ENCODE measurements at regions of chr12 and their contacts with region 1.

Region 1: GRCh38 chr12:54958048-54958658 is 26.4 kb downstream of the TESPA1 start:
- DNase-seq: peak in 1 of 2 donors; percentile 51
- ATAC-seq: peak in 4 of 8 donors; percentile 42 to 61 (median 50)
- H3K4me3 ChIP-seq: no peak overlapping the region
- H3K27ac ChIP-seq: no peak overlapping the region
- H3K4me1 ChIP-seq: peaks cover 0 to 31% (median 0%) of the 10 kb centered on the region in 9 donors
- H3K27me3 ChIP-seq: peaks cover 0 to 46% (median 9%) of the 10 kb centered on the region in 7 donors
- CTCF ChIP-seq: peak; percentile 18 to 81 (median 70)

Region 2: GRCh38 chr12:54439521-54440255 is 518.5 kb before region 1 on chr12:
- intact Hi-C with region 1: no loop called
- DNase-seq: peak in 1 of 2 donors; percentile 16
- ATAC-seq: peak; percentile 85 to 93 (median 92)
- H3K4me3 ChIP-seq: no peak overlapping the region
- H3K27ac ChIP-seq: peak overlapping the region in 2 of 10 donors; percentile 11 to 49
- H3K4me1 ChIP-seq: peaks cover 0 to 15% (median 5%) of the 10 kb centered on the region in 9 donors
- H3K27me3 ChIP-seq: no peaks in the 10 kb centered on the region
- CTCF ChIP-seq: peak; percentile 69 to 92 (median 84)

Region 3: DNA sequence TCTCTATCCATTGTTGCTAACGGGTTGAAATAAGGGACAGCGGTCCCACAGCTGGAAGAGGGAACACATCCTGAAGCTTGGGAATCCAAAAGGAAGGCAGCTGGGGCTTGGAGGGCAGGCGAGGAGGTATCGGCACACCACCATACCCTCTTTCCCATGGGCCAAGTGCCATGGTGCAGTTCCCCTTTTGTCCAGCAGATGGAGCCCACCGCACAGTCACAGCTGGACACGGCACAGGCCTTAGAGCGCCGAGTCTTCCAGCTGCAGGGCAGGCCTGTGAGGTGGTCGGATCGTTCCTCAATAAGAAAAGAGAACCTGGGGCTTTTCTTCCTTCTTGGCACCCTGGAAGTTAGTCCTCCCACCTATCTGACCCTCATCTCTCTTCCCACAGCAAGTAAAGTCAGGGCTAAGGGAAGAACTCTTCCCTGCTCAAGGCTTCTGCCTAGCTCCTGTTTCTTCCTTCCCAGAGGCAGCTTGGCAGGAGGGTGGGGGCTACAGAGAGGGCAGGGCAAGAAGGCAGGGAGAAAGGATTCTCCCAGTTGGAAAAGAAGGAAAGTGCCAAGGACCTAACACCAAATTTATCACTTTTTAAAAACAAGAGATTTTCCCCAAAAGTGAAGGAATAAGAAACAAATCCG is 378.3 kb before region 1 on chr12:
- intact Hi-C with region 1: loop called in 1 of 10 experiments (anchors 10 kb)
- DNase-seq: peak; percentile 86 to 87
- ATAC-seq: peak; percentile 87 to 97 (median 94)
- H3K4me3 ChIP-seq: no peak overlapping the region
- H3K27ac ChIP-seq: peak overlapping the region in 1 of 10 donors; percentile 22
- H3K4me1 ChIP-seq: peaks cover 0 to 8% (median 6%) of the 10 kb centered on the region in 9 donors
- H3K27me3 ChIP-seq: peaks cover 0 to 23% (median 8%) of the 10 kb centered on the region in 7 donors
- CTCF ChIP-seq: peak; percentile 96 to 100 (median 99)

Region 4: GRCh38 chr12:54596526-54596946 is 361.6 kb before region 1 on chr12:
- intact Hi-C with region 1: loop called in 7 of 10 experiments (anchors 5 to 10 kb)
- DNase-seq: peak; percentile 51 to 61
- ATAC-seq: peak in 6 of 8 donors; percentile 57 to 70 (median 66)
- H3K4me3 ChIP-seq: no peak overlapping the region
- H3K27ac ChIP-seq: no peak overlapping the region
- H3K4me1 ChIP-seq: peaks cover 0 to 4% (median 0%) of the 10 kb centered on the region in 9 donors
- H3K27me3 ChIP-seq: peaks cover 0 to 19% (median 6%) of the 10 kb centered on the region in 7 donors
- CTCF ChIP-seq: peak; percentile 59 to 89 (median 82)

Region 5: DNA sequence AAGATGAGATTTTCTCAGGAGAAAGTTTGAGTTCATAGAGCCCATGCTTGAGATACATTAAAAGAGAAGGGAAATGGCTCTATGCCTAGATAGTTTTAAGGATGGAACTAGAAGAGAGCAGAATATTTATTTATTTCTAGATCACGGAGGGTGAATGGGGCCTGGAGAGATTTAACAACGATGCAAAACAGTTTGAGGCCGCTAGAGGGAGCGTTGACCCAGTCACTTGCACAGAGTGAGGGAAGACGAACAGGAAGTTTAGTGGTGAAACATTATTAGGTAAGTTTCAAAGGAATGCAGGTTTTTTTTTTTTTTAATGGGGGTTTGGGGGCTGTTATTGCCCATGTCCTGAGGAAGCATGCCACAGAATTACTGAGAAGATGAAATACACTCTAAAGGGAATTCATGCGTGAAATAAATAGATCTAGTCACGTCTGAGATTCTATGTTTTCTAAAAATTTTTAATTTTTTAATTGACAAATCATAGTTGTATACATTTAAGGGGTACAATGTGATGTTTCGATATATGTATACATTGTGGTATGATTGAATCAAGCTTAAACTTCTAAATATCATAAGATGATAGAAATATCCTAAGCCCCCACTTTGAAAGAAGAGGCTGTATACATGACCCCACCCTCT is 354.9 kb before region 1 on chr12:
- intact Hi-C with region 1: loop called in 7 of 10 experiments (anchors 5 to 10 kb)
- DNase-seq: peak in 1 of 2 donors; percentile 41
- ATAC-seq: peak; percentile 33 to 83 (median 76)
- H3K4me3 ChIP-seq: no peak overlapping the region
- H3K27ac ChIP-seq: no peak overlapping the region
- H3K4me1 ChIP-seq: no peaks in the 10 kb centered on the region
- H3K27me3 ChIP-seq: peaks cover 0 to 12% (median 7%) of the 10 kb centered on the region in 7 donors
- CTCF ChIP-seq: peak; percentile 43 to 82 (median 74)

Region 6: DNA sequence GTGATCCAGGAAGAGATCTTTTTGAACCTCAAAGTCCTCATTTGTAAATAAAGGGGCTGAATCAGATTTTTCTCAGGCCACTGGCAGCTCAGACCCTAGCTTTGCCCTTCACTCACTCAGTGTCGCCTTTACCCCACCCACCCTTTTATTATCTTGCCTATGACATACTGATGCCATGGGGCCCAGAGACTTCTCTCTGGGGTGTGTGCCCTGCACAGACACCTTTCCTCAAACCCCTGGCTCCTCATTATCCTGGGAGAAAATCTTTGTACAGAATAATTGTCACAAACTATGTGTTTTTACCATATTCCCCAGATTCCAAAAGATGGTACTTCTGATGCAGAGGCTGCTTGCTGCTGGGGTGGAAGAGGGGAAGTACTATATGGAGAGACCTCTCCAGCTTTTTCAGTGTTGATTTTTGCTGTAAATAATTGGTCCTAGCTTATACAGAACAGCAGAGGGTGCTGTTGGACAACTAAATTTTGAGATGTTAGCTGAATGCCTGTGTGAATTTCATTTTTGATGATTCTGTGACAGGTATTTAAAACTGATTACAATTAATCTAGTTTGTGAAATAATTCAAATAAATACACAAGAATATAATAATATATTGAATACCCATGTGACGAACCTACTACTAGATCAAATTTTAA is 256.1 kb before region 1 on chr12:
- intact Hi-C with region 1: loop called in 6 of 10 experiments (anchors 2 to 5 kb)
- DNase-seq: no peak
- ATAC-seq: no peak
- H3K4me3 ChIP-seq: no peak overlapping the region
- H3K27ac ChIP-seq: no peak overlapping the region
- H3K4me1 ChIP-seq: no peaks in the 10 kb centered on the region
- H3K27me3 ChIP-seq: peaks cover 0 to 16% (median 4%) of the 10 kb centered on the region in 7 donors
- CTCF ChIP-seq: peak; percentile 25 to 75 (median 65)

Region 7: GRCh38 chr12:54749191-54749818 is 208.8 kb before region 1 on chr12:
- intact Hi-C with region 1: loop called (anchors 1 to 5 kb)
- DNase-seq: peak in 1 of 2 donors; percentile 25
- ATAC-seq: no peak
- H3K4me3 ChIP-seq: no peak overlapping the region
- H3K27ac ChIP-seq: no peak overlapping the region
- H3K4me1 ChIP-seq: peaks cover 0 to 3% (median 0%) of the 10 kb centered on the region in 9 donors
- H3K27me3 ChIP-seq: peaks cover 0 to 20% (median 10%) of the 10 kb centered on the region in 7 donors
- CTCF ChIP-seq: peak; percentile 35 to 84 (median 76)

Region 8: GRCh38 chr12:54853995-54854566 is 104.1 kb before region 1 on chr12 and contains the start of gene MUCL1:
- intact Hi-C with region 1: loop called in 6 of 10 experiments (anchors 2 to 10 kb)
- DNase-seq: peak in 1 of 2 donors; percentile 42
- ATAC-seq: peak in 7 of 8 donors; percentile 46 to 67 (median 62)
- H3K4me3 ChIP-seq: no peak within 1 kb of the TSS
- H3K27ac ChIP-seq: no peak within 1 kb of the TSS
- H3K4me1 ChIP-seq: no peaks in the 10 kb centered on the region
- H3K27me3 ChIP-seq: peaks cover 0 to under 1% (median 0%) of the 10 kb centered on the region in 7 donors
- CTCF ChIP-seq: peak; percentile 36 to 81 (median 58)
- total RNA-seq, gene MUCL1: not detected

Region 9: DNA sequence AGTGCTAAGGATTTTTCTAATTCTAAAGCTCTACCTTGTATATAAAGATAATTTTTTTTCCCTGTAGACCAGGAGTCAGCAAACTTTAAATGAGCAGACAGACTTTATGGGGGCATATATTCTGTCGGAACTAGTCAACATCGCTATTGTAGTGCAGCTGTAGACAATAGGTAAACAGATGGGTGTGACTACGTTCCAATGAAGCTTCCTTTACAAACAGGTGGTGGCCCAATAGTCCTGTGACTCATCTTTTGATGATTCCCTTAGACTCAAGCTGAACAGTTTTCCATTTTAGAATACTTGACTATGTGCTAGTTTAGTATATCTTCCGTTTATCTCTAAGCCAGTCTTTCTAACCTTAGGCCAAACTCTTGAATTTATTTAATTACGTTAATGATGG is 87.5 kb before region 1 on chr12:
- intact Hi-C with region 1: no loop called
- DNase-seq: no peak
- ATAC-seq: no peak
- H3K4me3 ChIP-seq: no peak overlapping the region
- H3K27ac ChIP-seq: no peak overlapping the region
- H3K4me1 ChIP-seq: no peaks in the 10 kb centered on the region
- H3K27me3 ChIP-seq: peaks cover 0 to 7% (median 0%) of the 10 kb centered on the region in 7 donors
- CTCF ChIP-seq: no peak